Breast epithelium (tissue), 4 donors: ENCODE measurements at regions of chr7 and their contacts with region 1.

Region 1: GRCh38 chr7:82449910-82450309 is 6.3 kb upstream of the CACNA2D1 start:
- DNase-seq: no peak
- H3K4me3 ChIP-seq: no peak overlapping the region
- H3K27ac ChIP-seq: no peak overlapping the region
- H3K4me1 ChIP-seq: no peaks in the 10 kb centered on the region
- H3K27me3 ChIP-seq: no peaks in the 10 kb centered on the region
- CTCF ChIP-seq: no peak
- POLR2A ChIP-seq: no peak

Region 2: GRCh38 chr7:81562581-81562980 is 887.3 kb before region 1 on chr7:
- intact Hi-C with region 1: loop called (anchors 5 kb)
- DNase-seq: no peak
- H3K4me3 ChIP-seq: no peak overlapping the region
- H3K27ac ChIP-seq: no peak overlapping the region
- H3K4me1 ChIP-seq: no peaks in the 10 kb centered on the region
- H3K27me3 ChIP-seq: no peaks in the 10 kb centered on the region
- CTCF ChIP-seq: no peak
- POLR2A ChIP-seq: no peak